H1 (cell line): ENCODE measurements at regions of chr6 and their contacts with region 1.

Region 1: GRCh38 chr6:27146706-27147505 is 100.6 kb upstream of the PRSS16 start:
- DNase-seq: peak; percentile 89 to 93
- H3K4me3 ChIP-seq: peak overlapping the region; percentile 60 to 86 (median 76)
- H3K27ac ChIP-seq: peak overlapping the region; percentile 98
- H3K4me1 ChIP-seq: peaks cover 0 to 11% (median 1%) of the 10 kb centered on the region in 4 experiments; a peak in 4 of 7 replicates
- H3K27me3 ChIP-seq: no peaks in the 10 kb centered on the region
- CTCF ChIP-seq: no peak
- EP300 ChIP-seq: 0 out of 3 replicates have a peak, but pooled peaks of 1 of the 2 experiments have one; percentile 16
- POLR2A ChIP-seq: peak; percentile 98 to 99
- RAD21 ChIP-seq: no peak

Region 2: GRCh38 chr6:26196846-26197648 is 949.9 kb before region 1 on chr6:
- CTCF ChIA-PET with region 1: no interaction called
- POLR2A ChIA-PET with region 1: interaction called, 76 read pairs
- DNase-seq: peak in 1 of 2 experiments; percentile 76
- H3K4me3 ChIP-seq: peak overlapping the region; percentile 85 to 98 (median 89)
- H3K27ac ChIP-seq: peak overlapping the region; percentile 82
- H3K4me1 ChIP-seq: peaks cover 0 to 1% (median 0%) of the 10 kb centered on the region in 4 experiments; a peak in 1 of 7 replicates
- H3K27me3 ChIP-seq: no peaks in the 10 kb centered on the region
- CTCF ChIP-seq: no peak
- EP300 ChIP-seq: no peak
- POLR2A ChIP-seq: peak; percentile 99
- RAD21 ChIP-seq: no peak

Region 3: GRCh38 chr6:26223650-26224546 is 923.0 kb before region 1 on chr6:
- CTCF ChIA-PET with region 1: no interaction called
- POLR2A ChIA-PET with region 1: interaction called, 23 read pairs
- DNase-seq: no peak
- H3K4me3 ChIP-seq: peak overlapping the region; percentile 61 to 94 (median 76)
- H3K27ac ChIP-seq: peak overlapping the region; percentile 91
- H3K4me1 ChIP-seq: peaks cover 0 to 7% (median 3%) of the 10 kb centered on the region in 4 experiments; a peak in 5 of 7 replicates
- H3K27me3 ChIP-seq: no peaks in the 10 kb centered on the region
- CTCF ChIP-seq: no peak
- EP300 ChIP-seq: no peak
- POLR2A ChIP-seq: peak; percentile 48 to 76; a peak in 2 of 3 replicates
- RAD21 ChIP-seq: no peak

Region 4: GRCh38 chr6:27040244-27040981 is 106.5 kb before region 1 on chr6:
- CTCF ChIA-PET with region 1: no interaction called
- POLR2A ChIA-PET with region 1: no interaction called
- DNase-seq: no peak
- H3K4me3 ChIP-seq: no peak overlapping the region
- H3K27ac ChIP-seq: no peak overlapping the region
- H3K4me1 ChIP-seq: no peaks in the 10 kb centered on the region
- H3K27me3 ChIP-seq: no peaks in the 10 kb centered on the region; a peak in 1 of 7 replicates
- CTCF ChIP-seq: no peak
- EP300 ChIP-seq: no peak
- POLR2A ChIP-seq: no peak
- RAD21 ChIP-seq: no peak

Region 5: DNA sequence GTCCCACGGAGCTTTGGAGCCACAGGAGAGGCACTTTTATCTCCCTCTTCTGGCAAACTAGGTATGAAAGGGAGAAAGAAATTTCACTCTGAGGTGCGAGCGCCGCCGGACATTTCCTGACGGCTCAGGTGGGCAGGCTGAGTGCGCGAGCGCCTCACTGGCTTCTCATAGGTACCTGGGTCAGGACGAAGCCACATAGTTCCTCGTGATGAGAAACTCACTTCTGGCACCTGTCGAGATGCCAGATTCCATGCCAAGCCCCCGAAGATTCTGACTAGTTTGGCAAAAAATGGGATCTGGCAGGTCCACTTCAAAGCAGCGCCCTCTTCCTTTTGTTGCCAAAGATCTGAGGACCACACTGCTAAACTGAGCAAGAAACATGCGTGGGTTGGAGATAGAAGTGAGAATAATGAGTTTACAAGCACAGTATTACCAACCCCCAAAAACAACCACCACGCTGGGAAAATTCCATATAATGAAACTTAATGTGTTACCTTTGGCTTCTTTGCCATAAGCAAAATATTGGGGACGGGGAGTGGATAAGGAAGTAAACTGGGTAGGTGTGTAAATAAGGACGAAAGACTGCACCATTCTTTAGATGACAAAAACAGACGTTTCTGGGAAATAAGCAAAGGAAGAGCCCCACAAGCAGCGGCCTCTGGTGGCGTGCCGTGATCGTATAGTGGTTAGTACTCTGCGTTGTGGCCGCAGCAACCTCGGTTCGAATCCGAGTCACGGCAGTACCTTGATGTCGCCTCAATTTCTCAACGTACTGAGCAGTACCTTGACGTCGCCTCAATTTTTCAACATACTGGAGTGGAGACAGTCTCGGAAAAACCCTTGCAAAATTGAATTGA is 10.8 kb after region 1 on chr6:
- CTCF ChIA-PET with region 1: interaction called, 11 read pairs
- POLR2A ChIA-PET with region 1: interaction called, 70 read pairs
- DNase-seq: peak in 1 of 2 experiments; percentile 77
- H3K4me3 ChIP-seq: peak overlapping the region; percentile 74 to 85 (median 84)
- H3K27ac ChIP-seq: no peak overlapping the region
- H3K4me1 ChIP-seq: peaks cover 2 to 11% (median 7%) of the 10 kb centered on the region in 4 experiments; a peak in 5 of 7 replicates
- H3K27me3 ChIP-seq: no peaks in the 10 kb centered on the region
- CTCF ChIP-seq: peak; percentile 33 to 65 (median 52)
- EP300 ChIP-seq: no peak
- POLR2A ChIP-seq: no peak
- RAD21 ChIP-seq: peak in 1 of 2 experiments; percentile 25; a peak in 2 of 4 replicates

Region 6: DNA sequence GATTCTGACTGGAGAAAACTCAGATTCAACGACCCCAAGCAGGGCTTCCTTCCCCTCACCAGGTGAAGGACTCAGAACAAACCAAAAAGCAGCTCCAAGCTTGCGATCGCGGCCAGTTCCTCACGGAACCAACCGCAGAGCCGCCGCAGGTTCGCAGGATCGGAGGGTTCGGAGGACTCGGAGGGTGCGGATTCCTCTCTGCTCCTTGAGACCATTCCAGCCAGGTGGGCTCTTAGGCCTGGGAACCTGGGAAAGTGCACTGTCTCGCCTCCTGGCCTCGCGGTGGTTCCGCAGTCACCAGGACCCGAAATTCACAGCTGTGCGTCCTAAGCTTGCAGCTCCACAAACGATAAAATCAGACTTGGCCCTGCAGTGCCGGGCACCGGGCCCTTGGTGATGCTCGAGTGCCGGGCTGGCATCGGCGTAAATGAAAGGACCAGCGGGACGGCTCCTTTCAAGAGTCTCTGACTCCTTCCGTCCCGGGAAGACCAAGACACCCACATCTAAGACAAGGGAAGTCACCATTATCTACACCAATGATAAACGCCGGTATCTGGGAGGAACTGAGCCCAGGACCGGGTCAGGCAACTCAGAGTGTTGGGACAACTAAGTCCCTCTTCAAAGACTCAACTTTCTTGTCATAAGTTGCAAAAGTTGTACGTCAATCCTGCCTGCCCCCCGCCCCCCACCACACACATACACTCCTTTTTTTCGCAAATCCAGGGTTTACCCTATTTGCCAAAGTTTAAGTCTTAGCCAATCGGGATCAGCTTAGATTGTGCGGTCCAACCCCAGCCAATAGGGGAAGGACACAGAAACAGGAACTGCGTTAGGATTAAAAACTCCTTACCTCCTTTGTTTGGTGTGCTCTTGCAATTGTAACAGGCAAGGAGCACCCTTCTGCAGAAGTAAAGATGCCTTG is 30.8 kb after region 1 on chr6:
- CTCF ChIA-PET with region 1: interaction called, 3 read pairs
- POLR2A ChIA-PET with region 1: interaction called, 56 read pairs
- DNase-seq: peak in 1 of 2 experiments; percentile 84
- H3K4me3 ChIP-seq: peak overlapping the region; percentile 96 to 100 (median 100)
- H3K27ac ChIP-seq: peak overlapping the region; percentile 89
- H3K4me1 ChIP-seq: peaks cover 0 to 6% (median 1%) of the 10 kb centered on the region in 4 experiments; a peak in 3 of 7 replicates
- H3K27me3 ChIP-seq: no peaks in the 10 kb centered on the region
- CTCF ChIP-seq: peak; percentile 38 to 63 (median 47)
- EP300 ChIP-seq: no peak
- POLR2A ChIP-seq: peak; percentile 64 to 70
- RAD21 ChIP-seq: peak; percentile 48 to 63

Region 7: GRCh38 chr6:27825025-27825793 is 678.3 kb after region 1 on chr6:
- CTCF ChIA-PET with region 1: no interaction called
- POLR2A ChIA-PET with region 1: interaction called, 92 read pairs
- DNase-seq: no peak
- H3K4me3 ChIP-seq: peak overlapping the region; percentile 59 to 90 (median 81)
- H3K27ac ChIP-seq: peak overlapping the region; percentile 95; the same call in 1 of the 2 replicates
- H3K4me1 ChIP-seq: peaks cover 0 to 3% (median 0%) of the 10 kb centered on the region in 4 experiments; a peak in 1 of 7 replicates
- H3K27me3 ChIP-seq: no peaks in the 10 kb centered on the region
- CTCF ChIP-seq: no peak
- EP300 ChIP-seq: no peak
- POLR2A ChIP-seq: peak in 1 of 2 experiments; percentile 32; a peak in 2 of 3 replicates
- RAD21 ChIP-seq: no peak

Region 8: GRCh38 chr6:28207510-28208110 is 1060.7 kb after region 1 on chr6:
- CTCF ChIA-PET with region 1: no interaction called
- POLR2A ChIA-PET with region 1: no interaction called
- DNase-seq: peak in 1 of 2 experiments; percentile 73
- H3K4me3 ChIP-seq: peak overlapping the region; percentile 31 to 71 (median 60); a peak in 7 of 8 replicates
- H3K27ac ChIP-seq: no peak overlapping the region
- H3K4me1 ChIP-seq: peaks cover 0 to 2% (median 0%) of the 10 kb centered on the region in 4 experiments; a peak in 1 of 7 replicates
- H3K27me3 ChIP-seq: peaks cover 32 to 70% (median 54%) of the 10 kb centered on the region in 4 experiments
- CTCF ChIP-seq: no peak
- EP300 ChIP-seq: no peak
- POLR2A ChIP-seq: no peak
- RAD21 ChIP-seq: no peak